ENCODE measurements at regions of chr5 and their contacts with region 1.

Region 1: GRCh38 chr5:103232393-103232999 is 26.1 kb upstream of the MACIR start:
- DNase-seq: peak; percentile 39
- ATAC-seq: peak; percentile 80
- H3K4me3 Mint-ChIP-seq: no peak overlapping the region
- H3K27ac Mint-ChIP-seq: no peak overlapping the region
- H3K4me1 Mint-ChIP-seq: no peaks in the 10 kb centered on the region
- H3K27me3 Mint-ChIP-seq: peaks cover 32% of the 10 kb centered on the region

Region 2: DNA sequence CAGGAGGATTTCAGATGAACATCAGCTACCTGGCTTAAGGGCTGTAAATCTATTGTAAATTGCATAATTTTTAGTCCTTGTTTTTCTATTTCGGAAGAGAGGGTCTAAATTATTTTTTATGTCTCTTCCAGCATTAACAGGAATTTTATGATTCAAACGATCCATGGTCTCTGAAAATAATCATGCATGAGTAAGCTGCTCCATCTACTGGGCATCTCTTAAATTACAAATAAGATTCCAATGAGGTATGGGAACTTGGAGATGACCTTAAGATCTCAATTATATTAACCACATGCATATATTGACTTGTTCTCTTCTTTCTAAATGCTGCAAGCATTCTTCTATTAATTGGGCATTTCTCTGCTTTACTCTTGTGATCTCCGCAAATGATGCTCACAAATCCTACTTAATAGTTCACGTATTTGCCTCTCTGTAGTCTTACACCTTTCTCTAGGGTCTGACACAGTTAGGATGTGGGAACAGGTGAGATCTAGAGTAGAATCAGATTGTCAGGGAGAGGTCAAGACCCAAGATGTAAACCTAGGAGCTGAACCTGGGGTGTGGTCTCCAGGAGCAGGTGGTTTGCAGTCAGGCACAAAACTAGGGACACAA is 243.2 kb after region 1 on chr5:
- CTCF ChIA-PET with region 1: interaction called, 47 read pairs
- POLR2A ChIA-PET with region 1: no interaction called
- DNase-seq: no peak
- ATAC-seq: no peak
- H3K4me3 Mint-ChIP-seq: no peak overlapping the region
- H3K27ac Mint-ChIP-seq: no peak overlapping the region
- H3K4me1 Mint-ChIP-seq: no peaks in the 10 kb centered on the region
- H3K27me3 Mint-ChIP-seq: peaks cover 16% of the 10 kb centered on the region